RWPE1 (cell line): ENCODE measurements at regions of chr2 and their contacts with region 1.

Region 1: GRCh38 chr2:178891265-178891958 is 84.2 kb upstream of the TTN start:
- DNase-seq: peak; percentile 37
- H3K27ac ChIP-seq: no peak overlapping the region
- CTCF ChIP-seq: peak; percentile 90

Region 2: DNA sequence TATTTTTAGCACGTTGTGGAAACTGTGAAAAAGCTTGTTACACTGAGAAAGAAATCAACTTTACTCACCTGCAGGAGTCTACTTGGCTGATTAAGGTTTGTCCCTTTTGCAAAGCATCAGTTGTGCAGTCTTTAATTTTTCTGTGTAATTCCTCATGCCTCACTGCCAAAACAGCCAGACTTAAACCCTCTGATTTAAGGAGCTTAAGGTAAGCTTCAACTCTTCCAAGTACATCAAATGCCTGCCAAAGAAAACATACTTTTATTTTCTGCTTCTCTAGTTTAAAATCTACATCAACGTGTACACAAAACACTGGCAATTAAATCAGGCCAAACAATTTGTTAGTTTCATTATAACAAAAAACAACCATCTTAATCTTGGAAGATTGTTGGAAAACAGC is 13.8 kb after region 1 on chr2:
- CTCF ChIA-PET with region 1: interaction called, 11 read pairs
- POLR2A ChIA-PET with region 1: no interaction called
- DNase-seq: no peak
- H3K27ac ChIP-seq: no peak overlapping the region
- CTCF ChIP-seq: no peak

Region 3: GRCh38 chr2:179562330-179562885 is 671.0 kb after region 1 on chr2:
- CTCF ChIA-PET with region 1: no interaction called
- POLR2A ChIA-PET with region 1: no interaction called
- DNase-seq: no peak
- H3K27ac ChIP-seq: no peak overlapping the region
- CTCF ChIP-seq: no peak